ENCODE measurements at regions of chr9 and their contacts with region 1.

Region 1: DNA sequence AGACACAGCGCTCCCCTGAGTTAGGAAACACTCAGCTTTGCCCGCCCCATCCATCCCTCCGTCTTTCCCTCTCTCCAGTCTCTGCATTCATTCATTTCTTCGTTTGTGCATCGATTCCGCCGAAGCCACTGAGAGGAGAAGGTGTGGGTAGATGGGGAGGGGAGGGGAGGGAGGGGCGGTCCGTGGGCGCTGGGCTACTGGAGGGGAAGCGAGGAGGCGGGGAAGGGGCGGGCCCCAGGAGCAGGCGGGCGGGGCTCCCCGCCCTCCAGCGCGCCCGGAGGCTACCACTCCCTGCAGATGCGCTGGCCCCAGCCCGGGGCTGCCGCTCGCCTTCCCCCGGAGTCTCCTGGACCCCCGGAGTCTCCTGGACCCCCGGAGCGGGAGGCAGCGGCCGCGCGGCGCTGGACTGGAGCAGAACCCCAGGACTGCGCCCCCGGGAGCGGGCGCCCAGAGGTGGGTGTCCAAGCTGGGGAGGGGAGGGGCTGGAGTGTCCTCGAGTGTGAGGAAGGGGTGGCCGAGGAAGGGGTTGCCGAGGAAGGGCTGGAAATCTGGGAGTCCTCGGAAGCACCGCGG is 159.5 kb downstream of the C9orf152 start:
- DNase-seq: peak; percentile 91
- H3K4me3 ChIP-seq: peak overlapping the region; percentile 72 to 89 (median 78)
- H3K27ac ChIP-seq: peak overlapping the region; percentile 76 to 88 (median 84)
- H3K4me1 ChIP-seq: peaks cover 0 to 38% (median 23%) of the 10 kb centered on the region in 4 donors
- H3K27me3 ChIP-seq: no peaks in the 10 kb centered on the region
- CTCF ChIP-seq: no peak
- EP300 ChIP-seq: no peak
- POLR2A ChIP-seq: peak; percentile 66 to 83

Region 2: GRCh38 chr9:110125207-110125751 is 76.8 kb after region 1 on chr9:
- intact Hi-C with region 1: loop called (anchors 5 kb)
- DNase-seq: peak; percentile 97
- H3K4me3 ChIP-seq: peak overlapping the region; percentile 25 to 47 (median 38)
- H3K27ac ChIP-seq: peak overlapping the region; percentile 87 to 91 (median 90)
- H3K4me1 ChIP-seq: peaks cover 0 to 74% (median 65%) of the 10 kb centered on the region in 4 donors
- H3K27me3 ChIP-seq: no peaks in the 10 kb centered on the region
- CTCF ChIP-seq: no peak
- EP300 ChIP-seq: peak in 2 of 4 donors; percentile 61 to 74
- POLR2A ChIP-seq: peak in 1 of 2 donors; percentile 64

Region 3: DNA sequence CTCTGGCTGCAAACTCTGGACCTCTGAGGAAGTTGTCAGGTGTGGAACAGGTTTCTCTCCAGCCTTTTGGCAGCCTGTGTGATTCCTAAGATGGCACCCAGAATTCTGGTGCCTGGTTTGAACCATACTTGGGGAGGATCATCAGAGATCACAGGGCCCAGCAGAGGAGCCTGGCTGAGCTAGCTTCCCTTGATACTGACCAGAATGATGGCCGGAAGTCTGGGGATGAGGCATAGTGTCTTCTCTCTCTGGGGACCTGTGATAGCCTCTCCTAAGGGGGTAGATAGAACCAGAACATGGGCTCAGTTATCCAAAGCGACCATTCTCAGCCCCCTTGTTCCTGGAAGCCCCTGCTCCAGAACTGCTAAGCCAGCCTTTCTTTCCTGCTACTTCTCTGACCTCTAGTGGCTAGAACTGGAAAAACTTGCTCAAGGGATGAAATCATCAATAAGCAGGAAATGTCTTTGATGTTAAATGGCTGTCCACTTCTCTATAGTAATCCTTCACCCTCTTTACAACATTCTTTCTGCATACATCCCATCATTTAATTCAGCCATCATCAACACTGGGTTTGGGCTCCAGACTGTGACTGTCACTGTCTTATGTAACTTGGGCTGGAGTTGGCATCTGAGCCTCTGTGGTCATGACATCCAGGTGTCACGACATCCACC is 104.3 kb after region 1 on chr9:
- intact Hi-C with region 1: loop called (anchors 5 kb)
- DNase-seq: no peak
- H3K4me3 ChIP-seq: no peak overlapping the region
- H3K27ac ChIP-seq: peak overlapping the region in 2 of 4 donors; percentile 27 to 34
- H3K4me1 ChIP-seq: peaks cover 0 to 70% (median 44%) of the 10 kb centered on the region in 4 donors
- H3K27me3 ChIP-seq: no peaks in the 10 kb centered on the region
- CTCF ChIP-seq: peak; percentile 53 to 87 (median 70)
- EP300 ChIP-seq: no peak
- POLR2A ChIP-seq: no peak

Region 4: GRCh38 chr9:110256380-110257096 is 208.0 kb after region 1 on chr9 and contains the start of gene TXN:
- intact Hi-C with region 1: loop called (anchors 5 kb)
- DNase-seq: peak; percentile 94
- H3K4me3 ChIP-seq: peak within 1 kb of the TSS; percentile 75 to 95 (median 82)
- H3K27ac ChIP-seq: peak within 1 kb of the TSS; percentile 89 to 95 (median 90)
- H3K4me1 ChIP-seq: peaks cover 0 to 27% (median 24%) of the 10 kb centered on the region in 4 donors
- H3K27me3 ChIP-seq: no peaks in the 10 kb centered on the region
- CTCF ChIP-seq: no peak
- EP300 ChIP-seq: peak; percentile 40 to 88 (median 74)
- POLR2A ChIP-seq: peak; percentile 39 to 61
- total RNA-seq, gene TXN: 94.9 to 211 (median 158) TPM